Right ventricle myocardium inferior (tissue), 1 donor: ENCODE measurements at regions of chrX and their contacts with region 1.

Region 1: DNA sequence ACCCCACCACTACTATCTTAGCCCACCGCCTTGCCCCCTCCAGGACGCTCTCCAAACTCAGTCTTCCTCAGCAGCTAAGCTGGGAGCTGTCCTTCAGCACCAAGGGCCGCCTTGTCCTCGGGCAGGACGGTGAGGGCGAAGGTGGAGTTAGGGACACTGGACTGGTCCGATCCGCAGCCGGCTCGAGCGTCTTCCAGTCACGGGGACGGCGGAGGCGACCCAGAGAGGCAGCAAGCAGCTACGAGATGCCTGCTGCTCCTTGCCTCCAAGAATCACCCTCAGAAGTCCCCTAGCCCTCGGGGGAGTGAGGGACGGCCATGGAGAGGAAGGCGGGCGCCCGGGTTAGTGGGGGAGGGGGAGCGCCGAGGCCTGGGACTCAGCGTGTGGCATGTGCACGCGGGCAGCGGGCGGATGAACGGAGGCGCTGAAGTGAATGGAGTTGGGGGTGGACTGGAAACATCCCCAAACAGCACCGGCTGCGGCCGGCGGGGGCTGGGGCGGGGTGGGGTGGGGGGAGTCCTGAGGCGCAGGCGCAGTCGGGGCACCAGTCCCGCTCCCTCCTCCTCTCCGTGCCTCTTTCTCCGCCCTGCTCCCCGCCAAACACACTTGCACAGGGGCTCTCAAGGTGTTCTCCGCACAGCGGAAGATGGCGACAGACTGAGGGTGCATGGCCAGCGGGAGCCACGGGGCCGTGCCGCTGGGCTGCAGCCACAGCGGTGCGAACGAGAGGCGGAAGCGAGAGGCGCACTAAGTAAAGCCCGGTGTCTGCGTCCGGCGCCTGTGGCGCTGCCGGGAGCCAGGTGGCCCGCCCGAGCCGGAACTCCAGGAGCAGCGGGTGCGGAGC is at the start of gene NALF2:
- DNase-seq: peak; percentile 78
- ATAC-seq: peak; percentile 56
- total RNA-seq, gene NALF2: 41.1 TPM

Region 2: DNA sequence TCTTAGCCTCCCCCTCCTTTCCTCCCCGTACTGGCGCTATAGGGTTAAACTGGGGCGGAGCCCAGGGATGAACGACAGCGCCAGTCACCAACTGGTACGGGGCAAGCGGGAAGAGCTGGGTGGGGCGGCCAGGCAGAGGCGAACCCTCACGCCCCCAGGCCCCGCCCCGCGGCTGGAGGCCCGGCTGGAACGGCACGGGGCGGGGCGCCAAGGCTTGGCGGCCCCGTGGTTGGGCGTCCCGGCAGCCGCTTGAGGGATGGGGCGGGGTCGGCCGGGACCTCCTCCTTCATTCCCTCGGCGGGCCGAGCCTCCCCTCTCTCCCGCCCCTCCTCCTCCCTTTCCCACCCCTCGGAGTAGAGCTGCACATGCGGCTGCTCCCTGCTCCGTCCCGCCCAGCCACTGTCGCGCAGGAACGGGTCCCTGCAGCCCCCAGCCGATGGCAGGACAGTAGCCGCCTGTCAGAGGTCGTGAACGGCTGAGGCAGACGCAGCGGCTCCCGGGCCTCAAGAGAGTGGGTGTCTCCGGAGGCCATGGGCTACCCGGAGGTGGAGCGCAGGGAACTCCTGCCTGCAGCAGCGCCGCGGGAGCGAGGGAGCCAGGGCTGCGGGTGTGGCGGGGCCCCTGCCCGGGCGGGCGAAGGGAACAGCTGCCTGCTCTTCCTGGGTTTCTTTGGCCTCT is 111.9 kb after region 1 on chrX and contains the start of gene EDA:
- intact Hi-C with region 1: loop called (anchors 5 kb)
- DNase-seq: peak; percentile 86
- ATAC-seq: peak; percentile 98
- total RNA-seq, gene EDA: 12.4 TPM

Region 3: DNA sequence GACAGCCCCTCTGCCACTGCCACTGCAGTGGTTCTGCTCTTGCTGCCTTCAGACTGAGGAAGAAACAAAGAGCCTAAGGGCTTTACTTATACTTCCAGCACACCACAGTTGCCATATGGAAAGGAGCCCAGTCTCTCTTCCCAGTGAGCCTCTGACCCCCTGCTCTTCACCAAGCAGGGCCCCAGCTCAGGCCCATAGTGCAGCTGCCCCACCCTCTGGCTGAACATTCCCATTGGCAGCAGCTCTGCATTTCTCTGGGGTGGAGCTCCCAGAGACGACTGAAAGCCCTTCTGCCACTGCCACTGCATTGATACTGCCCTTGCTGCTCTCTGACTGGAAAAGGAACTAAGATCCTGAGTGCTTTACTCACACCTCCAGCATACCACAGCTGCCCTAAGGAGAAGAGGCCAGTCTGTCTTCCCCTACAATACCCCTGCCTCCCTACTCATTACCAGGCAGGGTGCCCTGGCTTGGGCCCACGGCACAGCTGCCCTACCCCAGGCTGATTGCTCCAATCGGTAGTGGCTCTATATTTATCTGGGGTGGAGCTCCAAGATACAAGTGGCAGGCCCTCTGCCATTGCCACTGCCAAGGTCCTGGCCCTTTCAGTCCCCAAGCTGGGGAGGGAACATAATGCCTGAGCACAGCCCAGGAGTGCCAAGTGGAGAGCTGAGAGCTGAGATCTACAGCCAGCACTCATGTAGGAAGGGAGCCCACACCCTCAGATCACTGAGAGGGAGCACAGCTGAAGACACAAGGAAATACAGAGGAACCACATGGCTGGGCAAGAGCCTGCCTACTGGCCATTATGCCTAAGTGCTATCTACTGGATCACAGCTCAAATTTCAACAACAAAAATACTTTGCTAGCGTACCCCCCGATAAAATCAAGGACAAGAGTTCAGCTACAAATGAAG is 509.7 kb after region 1 on chrX:
- intact Hi-C with region 1: loop called (anchors 5 kb)
- DNase-seq: peak; percentile 56
- ATAC-seq: peak; percentile 95